Transverse colon (tissue), 4 donors: ENCODE measurements at regions of chr15 and their contacts with region 1.

Region 1: GRCh38 chr15:50908210-50909009 is at the start of gene AP4E1:
- DNase-seq: peak; percentile 94
- H3K4me3 ChIP-seq: peak within 1 kb of the TSS; percentile 81 to 98 (median 88)
- H3K27ac ChIP-seq: peak within 1 kb of the TSS; percentile 89 to 93 (median 93)
- H3K4me1 ChIP-seq: peaks cover 3 to 32% (median 26%) of the 10 kb centered on the region in 4 donors
- H3K27me3 ChIP-seq: no peaks in the 10 kb centered on the region
- CTCF ChIP-seq: peak; percentile 94 to 98 (median 95)
- EP300 ChIP-seq: peak; percentile 56
- POLR2A ChIP-seq: peak; percentile 52
- total RNA-seq, gene AP4E1: 6.0 to 22.4 (median 9.9) TPM

Region 2: GRCh38 chr15:50463423-50464358 is 444.7 kb before region 1 on chr15:
- in situ Hi-C with region 1: loop called in 1 of 4 experiments (anchors 25 kb)
- intact Hi-C with region 1: no loop called
- DNase-seq: no peak
- H3K4me3 ChIP-seq: no peak overlapping the region
- H3K27ac ChIP-seq: no peak overlapping the region
- H3K4me1 ChIP-seq: no peaks in the 10 kb centered on the region
- H3K27me3 ChIP-seq: no peaks in the 10 kb centered on the region
- CTCF ChIP-seq: no peak
- EP300 ChIP-seq: no peak
- POLR2A ChIP-seq: no peak

Region 3: DNA sequence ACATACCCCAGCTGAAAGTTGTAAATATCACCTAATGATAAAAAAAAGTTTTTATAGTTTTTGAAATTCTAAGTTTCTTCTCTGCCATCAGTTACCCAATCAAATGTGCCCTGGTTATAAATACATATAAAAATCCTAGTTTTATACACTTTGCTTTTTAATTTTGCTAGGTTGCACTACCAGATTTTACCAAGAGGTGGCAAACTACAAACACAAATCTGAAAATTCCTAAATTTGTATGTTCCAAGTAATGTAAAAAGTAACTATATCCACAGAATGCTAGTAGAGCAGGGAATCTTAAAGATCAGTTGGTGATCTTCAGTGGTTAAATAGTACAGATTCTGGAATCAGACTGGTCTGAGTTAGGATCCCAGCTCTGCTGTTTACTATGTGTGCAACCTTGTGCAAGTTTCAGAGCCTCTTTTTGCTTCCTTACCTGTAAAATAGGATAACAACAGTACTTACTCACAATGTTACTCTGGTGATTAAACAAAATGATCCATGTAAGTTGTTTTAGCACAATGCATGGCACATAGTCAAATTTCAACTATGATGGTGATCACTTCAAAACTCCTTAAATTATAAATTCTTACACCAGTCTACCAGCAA is 232.8 kb before region 1 on chr15:
- in situ Hi-C with region 1: loop called in 2 of 4 experiments (anchors 10 kb)
- intact Hi-C with region 1: loop called (anchors 10 kb)
- DNase-seq: no peak
- H3K4me3 ChIP-seq: no peak overlapping the region
- H3K27ac ChIP-seq: no peak overlapping the region
- H3K4me1 ChIP-seq: peaks cover 0 to 8% (median 4%) of the 10 kb centered on the region in 4 donors
- H3K27me3 ChIP-seq: no peaks in the 10 kb centered on the region
- CTCF ChIP-seq: peak; percentile 71 to 85 (median 84)
- EP300 ChIP-seq: no peak
- POLR2A ChIP-seq: no peak

Region 4: DNA sequence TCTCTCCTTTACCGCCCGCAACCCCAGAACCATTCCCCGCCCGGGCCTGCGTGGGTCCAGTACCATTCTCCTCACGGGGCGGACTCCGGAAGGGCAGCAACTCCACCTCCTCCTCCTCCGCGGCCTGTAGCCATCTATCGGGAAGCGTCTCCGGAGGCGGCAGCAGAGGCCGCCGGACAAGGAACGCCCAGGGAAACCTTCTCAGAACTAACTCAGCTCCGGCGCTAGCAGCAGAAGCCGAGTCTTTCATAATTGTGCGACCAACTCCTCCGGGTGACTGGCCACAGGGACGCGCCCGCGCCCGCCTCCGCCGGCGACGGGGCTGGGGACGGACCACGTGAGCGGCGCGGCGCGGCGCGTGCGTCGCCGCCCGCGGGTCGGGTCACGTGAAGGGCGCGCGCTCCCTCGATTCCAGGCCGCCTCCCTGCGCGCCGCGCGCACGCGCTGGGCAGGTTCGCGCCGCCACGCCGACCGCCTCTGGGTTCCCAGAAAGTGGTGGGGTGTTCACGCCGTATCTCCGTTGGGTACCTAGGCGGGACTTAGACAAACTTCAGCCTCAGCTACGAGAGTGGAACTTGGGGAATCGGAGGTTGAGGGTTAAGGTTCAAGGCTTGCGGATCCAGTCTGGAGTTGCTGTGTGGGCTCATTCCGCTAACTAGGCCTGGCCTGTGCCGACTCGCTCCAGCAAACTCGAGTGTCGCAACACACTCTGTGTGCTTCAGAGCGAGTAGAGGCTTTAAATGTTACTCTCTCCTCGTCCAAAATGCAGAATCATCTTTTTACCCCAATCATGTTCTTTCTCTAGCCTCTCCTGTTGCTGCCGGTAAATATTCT is 221.7 kb before region 1 on chr15 and contains the start of gene TRPM7:
- in situ Hi-C with region 1: no loop called
- intact Hi-C with region 1: loop called (anchors 10 kb)
- DNase-seq: peak; percentile 90
- H3K4me3 ChIP-seq: peak within 1 kb of the TSS; percentile 65 to 83 (median 71)
- H3K27ac ChIP-seq: peak within 1 kb of the TSS; percentile 86 to 96 (median 96)
- H3K4me1 ChIP-seq: peaks cover 12 to 45% (median 20%) of the 10 kb centered on the region in 4 donors
- H3K27me3 ChIP-seq: no peaks in the 10 kb centered on the region
- CTCF ChIP-seq: no peak
- EP300 ChIP-seq: no peak
- POLR2A ChIP-seq: peak; percentile 84
- total RNA-seq, gene TRPM7: 47.4 to 96.5 (median 48.8) TPM

Region 5: GRCh38 chr15:51022206-51022605 is 113.8 kb after region 1 on chr15:
- in situ Hi-C with region 1: no loop called
- intact Hi-C with region 1: no loop called
- DNase-seq: no peak
- H3K4me3 ChIP-seq: no peak overlapping the region
- H3K27ac ChIP-seq: no peak overlapping the region
- H3K4me1 ChIP-seq: no peaks in the 10 kb centered on the region
- H3K27me3 ChIP-seq: no peaks in the 10 kb centered on the region
- CTCF ChIP-seq: no peak
- EP300 ChIP-seq: no peak
- POLR2A ChIP-seq: no peak